ENCODE measurements at regions of chr11 and their contacts with region 1.

Region 1: DNA sequence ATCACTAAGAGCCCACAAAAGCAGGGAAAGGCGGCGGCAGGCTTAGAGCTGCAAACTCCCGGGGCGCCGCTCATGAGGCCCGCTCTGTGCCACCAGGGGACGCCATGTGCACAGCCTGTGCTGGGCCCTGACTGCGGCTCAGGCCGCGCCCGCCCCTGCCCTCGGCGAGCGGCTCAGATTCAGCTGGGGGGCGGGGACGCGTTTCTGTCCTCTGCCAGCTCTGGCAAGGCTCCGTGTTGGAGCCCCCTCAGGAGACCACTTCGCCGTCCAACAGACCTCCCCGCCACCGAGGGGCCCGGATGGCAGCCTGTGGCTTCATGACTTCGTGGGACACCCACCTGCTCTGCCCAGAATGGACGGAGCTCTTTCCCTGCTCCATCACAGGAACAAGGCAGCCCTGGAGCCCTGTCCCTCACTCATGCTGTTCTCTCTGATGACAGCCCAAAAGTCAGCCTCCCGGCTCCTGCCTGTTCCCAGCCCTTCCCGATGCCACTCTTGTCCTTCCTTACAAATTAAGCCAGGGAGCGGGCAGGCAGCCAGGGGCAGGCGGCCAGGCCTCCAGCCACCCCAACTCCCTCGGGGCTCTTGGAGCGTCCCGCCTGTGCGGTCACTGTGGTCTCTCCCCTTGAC is 69.1 kb downstream of the NAT10 start:
- DNase-seq: peak; percentile 69

Region 2: DNA sequence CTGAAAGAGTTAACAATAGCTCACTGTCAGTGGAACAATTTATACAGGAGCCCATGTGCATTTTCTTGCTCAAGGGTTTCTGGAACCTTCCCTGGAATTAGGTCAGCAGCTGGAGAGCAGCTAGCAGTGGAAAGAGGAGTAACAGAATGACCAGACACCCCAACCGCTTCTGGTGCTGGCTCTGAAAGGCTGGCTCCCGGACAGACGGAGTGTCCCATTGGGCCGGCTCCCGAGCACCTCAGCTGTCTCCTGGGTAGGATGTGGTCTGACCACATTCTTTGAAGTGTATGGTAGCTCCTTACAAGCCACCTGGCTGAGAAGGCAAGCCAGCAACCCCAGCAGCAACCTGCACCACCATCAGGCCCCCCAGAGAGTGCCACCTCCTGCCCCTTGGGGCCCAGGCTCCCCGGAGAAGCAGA is 138.6 kb after region 1 on chr11:
- in situ Hi-C with region 1: no loop called
- DNase-seq: no peak

Region 3: DNA sequence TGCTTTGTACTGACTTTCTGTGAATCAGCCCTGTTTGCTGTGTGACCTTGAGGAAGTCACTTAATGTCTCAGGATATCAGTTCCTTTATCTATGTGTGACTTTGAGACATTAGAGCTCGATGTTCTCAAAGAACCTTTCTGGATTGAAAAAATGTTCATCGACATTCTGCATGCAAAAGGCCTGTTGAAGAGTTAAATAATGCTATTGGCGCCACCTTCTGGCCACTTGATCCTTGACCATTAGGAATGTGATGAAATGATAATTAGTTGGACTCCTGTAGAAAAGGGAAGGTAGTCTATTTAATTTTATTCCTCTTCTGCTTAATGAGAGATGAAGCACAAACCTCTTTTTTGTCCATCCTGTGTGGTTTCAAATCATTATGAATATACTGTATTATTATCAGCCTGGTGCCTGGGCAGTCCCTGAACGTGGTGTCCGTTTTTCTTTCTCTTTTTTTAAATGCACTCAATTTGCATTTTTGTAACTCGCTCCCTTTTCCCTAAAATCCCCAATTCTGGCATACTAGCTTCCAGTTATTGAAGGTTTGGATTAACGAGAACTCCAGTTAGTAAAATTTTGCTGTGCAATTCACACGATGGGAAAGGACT is 318.4 kb after region 1 on chr11:
- in situ Hi-C with region 1: loop called (anchors 25 kb)
- DNase-seq: peak; percentile 64